Dorsolateral prefrontal cortex (tissue), 120 donors: ENCODE measurements at regions of chr9 and their contacts with region 1.

Region 1: GRCh38 chr9:123338710-123339665 is 17.0 kb upstream of the CRB2 start:
- DNase-seq: peak in 6 of 10 donors; percentile 65 to 78 (median 72)
- H3K4me3 ChIP-seq: peak overlapping the region in 28 of 59 donors; percentile 0 to 39 (median 14)
- H3K27ac ChIP-seq: peak overlapping the region in 58 of 59 donors; percentile 33 to 93 (median 83)
- H3K27me3 ChIP-seq: no peaks in the 10 kb centered on the region
- CTCF ChIP-seq: no peak

Region 2: GRCh38 chr9:123268240-123268949 is 70.6 kb before region 1 on chr9 and contains the start of gene STRBP:
- intact Hi-C with region 1: loop called in 1 of 2 experiments (anchors 5 kb)
- DNase-seq: peak; percentile 80 to 97 (median 90)
- H3K4me3 ChIP-seq: peak within 1 kb of the TSS; percentile 64 to 98 (median 90)
- H3K27ac ChIP-seq: peak within 1 kb of the TSS in 57 of 59 donors; percentile 18 to 93 (median 80)
- H3K27me3 ChIP-seq: no peaks in the 10 kb centered on the region
- CTCF ChIP-seq: peak in 27 of 56 donors; percentile 5 to 62 (median 29)
- total RNA-seq, gene STRBP: 42.5 to 205 (median 133) TPM

Region 3: GRCh38 chr9:123373946-123374345 is 35.0 kb after region 1 on chr9:
- intact Hi-C with region 1: no loop called
- DNase-seq: peak in 1 of 10 donors; percentile 58
- H3K4me3 ChIP-seq: peak overlapping the region in 4 of 59 donors; percentile 8 to 35 (median 20)
- H3K27ac ChIP-seq: peak overlapping the region in 56 of 59 donors; percentile 41 to 99 (median 83)
- H3K27me3 ChIP-seq: peaks cover 0 to 17% (median 0%) of the 10 kb centered on the region in 45 donors
- CTCF ChIP-seq: no peak

Region 4: DNA sequence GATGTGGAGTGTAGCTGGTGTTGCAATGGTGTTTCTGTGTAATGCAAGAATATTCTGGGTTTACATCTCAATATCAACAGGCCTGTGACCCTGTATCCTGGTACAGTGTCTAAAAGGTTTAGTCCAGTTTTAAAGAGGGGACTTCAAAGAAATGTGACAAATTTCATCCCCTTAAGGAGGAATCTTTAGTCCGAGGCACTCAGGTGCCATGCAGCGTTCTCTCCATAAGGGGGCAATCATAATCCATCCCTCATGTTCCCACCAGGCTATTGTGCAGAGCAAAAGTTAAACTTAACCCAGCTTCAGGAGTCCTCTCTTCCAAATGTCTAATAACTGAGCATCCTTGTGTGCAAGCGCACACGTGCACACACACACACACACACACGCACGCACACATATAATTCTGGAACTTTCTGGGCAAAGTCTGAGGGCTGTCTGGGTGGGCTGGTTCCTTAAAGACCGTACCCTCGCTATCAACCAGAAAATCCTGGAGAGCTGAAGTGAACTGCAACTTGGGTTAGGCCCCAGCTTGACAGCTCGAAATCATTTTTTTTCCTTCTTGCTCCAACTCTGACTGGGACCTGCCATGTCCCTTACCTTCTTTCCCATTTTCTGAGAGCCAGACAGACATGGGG is 63.0 kb after region 1 on chr9:
- intact Hi-C with region 1: no loop called
- DNase-seq: peak in 3 of 10 donors; percentile 29 to 65 (median 56)
- H3K4me3 ChIP-seq: no peak overlapping the region
- H3K27ac ChIP-seq: peak overlapping the region in 1 of 59 donors; percentile 7
- H3K27me3 ChIP-seq: no peaks in the 10 kb centered on the region
- CTCF ChIP-seq: peak; percentile 50 to 87 (median 76)

Region 5: DNA sequence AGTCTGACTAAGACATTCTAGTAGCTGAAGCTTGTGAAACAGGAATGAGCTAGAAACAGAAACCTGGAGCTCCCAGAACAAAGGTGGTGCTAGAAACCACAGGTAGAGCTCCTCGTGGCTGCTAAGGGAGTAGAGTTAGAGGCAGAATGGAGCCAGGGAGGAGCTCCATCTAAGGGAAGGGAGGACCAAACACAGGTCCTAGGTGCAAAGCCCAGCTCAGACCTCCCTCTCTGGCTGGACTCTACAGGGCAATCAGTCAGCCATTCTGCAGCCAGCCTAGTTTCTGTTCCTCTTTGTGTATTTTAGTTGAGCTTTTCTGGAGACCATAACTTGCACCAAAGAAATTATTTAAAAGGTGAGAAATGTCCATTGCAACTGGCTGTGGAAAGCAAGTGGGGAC is 87.4 kb after region 1 on chr9:
- intact Hi-C with region 1: no loop called
- DNase-seq: peak in 1 of 10 donors; percentile 7
- H3K4me3 ChIP-seq: no peak overlapping the region
- H3K27ac ChIP-seq: no peak overlapping the region
- H3K27me3 ChIP-seq: no peaks in the 10 kb centered on the region
- CTCF ChIP-seq: no peak